HEK293T (cell line): ENCODE measurements at regions of chr6 and their contacts with region 1.

Region 1: DNA sequence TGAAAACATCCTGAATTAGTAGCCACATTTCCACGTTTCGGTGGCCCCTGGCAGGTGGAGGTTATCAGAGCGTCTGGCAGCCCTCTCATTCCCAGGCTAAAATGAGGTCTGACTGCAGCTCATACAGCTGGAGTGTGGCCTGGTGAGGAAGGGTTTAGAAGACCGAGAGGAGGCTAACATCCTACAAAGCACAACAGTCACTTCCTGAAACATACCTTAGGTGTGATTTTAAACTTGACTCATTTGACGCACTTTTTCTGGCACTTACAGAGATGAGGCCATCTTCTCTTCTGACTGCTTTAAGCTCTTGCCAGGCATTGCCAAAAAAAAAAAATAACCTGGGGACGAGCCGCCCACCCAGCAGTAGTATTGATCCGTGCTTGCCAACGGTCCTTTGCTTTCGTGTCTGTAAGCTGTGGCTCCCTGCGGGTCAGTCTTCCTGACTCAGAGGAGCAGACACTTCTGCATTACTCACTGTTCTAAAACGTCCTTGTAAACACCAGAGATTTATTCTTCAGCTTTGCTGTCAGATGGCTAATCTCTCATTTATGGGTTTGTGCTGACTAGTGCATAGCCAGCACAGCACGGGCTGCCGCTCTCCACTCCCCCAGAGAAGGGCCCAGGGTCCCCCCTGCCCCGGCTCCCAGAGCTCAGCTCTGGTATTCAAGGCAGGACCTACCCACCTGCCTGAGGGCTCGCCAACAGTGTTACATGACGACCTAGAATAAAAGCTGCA is 78.4 kb upstream of the FRMD1 start:
- DNase-seq: peak; percentile 61

Region 2: DNA sequence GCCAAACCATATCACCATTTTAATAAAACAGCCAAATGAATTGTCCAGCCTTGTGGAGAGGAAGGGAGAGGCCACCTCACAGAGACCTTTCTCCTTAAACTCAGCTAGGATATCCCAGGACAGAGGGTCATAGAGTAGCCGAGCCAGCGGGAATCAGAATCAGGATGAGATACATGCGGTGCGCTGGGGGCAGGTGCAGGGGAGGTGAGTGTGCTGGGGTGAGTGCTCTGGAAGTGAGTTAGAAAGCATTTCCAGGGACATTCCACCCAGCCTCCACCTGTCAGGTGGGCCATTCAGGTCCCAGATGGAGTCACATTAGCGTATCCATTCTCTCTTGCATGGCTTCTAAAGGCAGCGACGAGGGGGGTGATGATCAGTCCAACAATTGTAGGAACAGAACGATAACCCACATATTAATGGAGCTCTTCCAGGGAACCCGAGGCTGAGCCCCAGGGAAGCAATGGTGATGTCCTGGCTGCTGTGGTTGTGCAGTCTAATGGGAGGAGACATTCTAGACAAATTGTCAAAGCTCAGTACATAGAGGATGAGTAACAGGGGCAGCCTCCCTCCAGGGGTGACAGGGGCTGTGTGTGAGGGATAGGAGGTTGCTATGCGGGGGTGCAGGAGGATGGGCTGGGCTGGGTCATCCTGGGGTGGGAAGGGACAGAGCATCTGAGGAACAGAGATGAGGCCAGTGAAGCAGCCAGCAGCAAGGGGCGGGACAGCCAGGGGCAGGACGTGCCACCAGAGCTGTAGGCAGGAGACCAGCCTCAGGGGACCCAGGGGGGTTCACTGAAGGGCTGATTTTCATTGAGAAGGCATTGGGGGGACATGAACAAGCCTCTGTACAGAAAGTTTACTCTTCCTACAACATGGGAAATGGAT is 10.2 kb after region 1 on chr6:
- CTCF ChIA-PET with region 1: interaction called, 3 read pairs
- POLR2A ChIA-PET with region 1: interaction called, 19 read pairs
- DNase-seq: no peak